ENCODE measurements at regions of chr10 and their contacts with region 1.

Region 1: DNA sequence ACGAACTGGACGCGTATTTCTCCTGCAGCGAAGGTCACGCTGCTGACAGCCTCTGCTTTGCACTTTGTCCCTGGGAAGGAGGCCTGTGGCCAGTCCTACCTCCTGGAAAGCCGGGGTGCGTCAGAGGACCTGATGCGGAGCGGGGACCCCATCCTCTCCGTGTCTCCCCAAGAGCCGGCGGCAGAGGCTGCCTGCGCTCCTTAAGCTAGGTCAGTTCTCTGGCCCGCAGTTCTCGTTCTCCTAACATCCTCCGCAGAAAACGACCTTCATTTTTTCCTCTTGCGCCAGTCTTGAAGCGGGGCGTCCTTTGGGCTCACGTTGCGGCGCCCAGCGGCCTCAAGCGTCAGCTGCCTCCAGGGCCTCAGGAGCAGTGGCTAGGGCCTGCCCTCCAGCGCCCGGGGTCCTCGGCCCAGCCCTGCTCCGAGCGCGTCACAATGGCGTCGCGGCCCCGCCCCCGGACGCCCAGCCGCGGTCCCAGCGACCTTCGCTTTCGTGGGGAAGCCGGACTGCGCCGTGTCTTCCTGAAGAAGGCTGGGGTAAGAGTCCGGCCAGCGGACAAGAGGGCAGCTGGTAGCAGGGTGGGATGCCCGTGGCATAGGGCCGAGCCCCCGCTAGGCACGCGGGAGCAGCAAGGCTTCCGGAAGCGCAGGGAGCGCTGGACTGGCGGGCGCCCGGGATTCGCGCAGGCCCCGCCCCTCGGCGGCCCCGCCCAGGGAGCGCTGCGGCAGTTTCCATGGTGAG is at the start of gene ZNF487:
- DNase-seq: peak; percentile 81 to 85
- ATAC-seq: peak; percentile 95 to 96
- H3K4me3 ChIP-seq: peak within 1 kb of the TSS; percentile 70 to 87 (median 77)
- H3K27ac ChIP-seq: peak within 1 kb of the TSS; percentile 91 to 99 (median 96)
- H3K4me1 ChIP-seq: peaks cover 6 to 8% of the 10 kb centered on the region in 2 donors
- H3K27me3 ChIP-seq: no peaks in the 10 kb centered on the region
- CTCF ChIP-seq: peak in 3 of 5 experiments; percentile 10 to 39 (median 31)
- POLR2A ChIP-seq: peak; percentile 81 to 94
- total RNA-seq, gene ZNF487: 0.80 to 2.4 (median 1.7) TPM

Region 2: GRCh38 chr10:43420369-43421200 is 16.0 kb before region 1 on chr10:
- in situ Hi-C with region 1: no loop called
- intact Hi-C with region 1: loop called (anchors 1 kb)
- DNase-seq: peak; percentile 87 to 95
- ATAC-seq: peak; percentile 92 to 93
- H3K4me3 ChIP-seq: peak overlapping the region; percentile 60 to 87 (median 79)
- H3K27ac ChIP-seq: peak overlapping the region; percentile 92 to 100 (median 96)
- H3K4me1 ChIP-seq: peaks cover 0 to 11% of the 10 kb centered on the region in 2 donors
- H3K27me3 ChIP-seq: no peaks in the 10 kb centered on the region
- CTCF ChIP-seq: peak in 1 of 5 experiments; percentile 21
- POLR2A ChIP-seq: peak; percentile 68 to 88

Region 3: GRCh38 chr10:43491855-43492254 is 55.3 kb after region 1 on chr10:
- in situ Hi-C with region 1: no loop called
- intact Hi-C with region 1: no loop called
- DNase-seq: no peak
- ATAC-seq: no peak
- H3K4me3 ChIP-seq: no peak overlapping the region
- H3K27ac ChIP-seq: no peak overlapping the region
- H3K4me1 ChIP-seq: no peaks in the 10 kb centered on the region
- H3K27me3 ChIP-seq: no peaks in the 10 kb centered on the region
- CTCF ChIP-seq: no peak
- POLR2A ChIP-seq: no peak

Region 4: DNA sequence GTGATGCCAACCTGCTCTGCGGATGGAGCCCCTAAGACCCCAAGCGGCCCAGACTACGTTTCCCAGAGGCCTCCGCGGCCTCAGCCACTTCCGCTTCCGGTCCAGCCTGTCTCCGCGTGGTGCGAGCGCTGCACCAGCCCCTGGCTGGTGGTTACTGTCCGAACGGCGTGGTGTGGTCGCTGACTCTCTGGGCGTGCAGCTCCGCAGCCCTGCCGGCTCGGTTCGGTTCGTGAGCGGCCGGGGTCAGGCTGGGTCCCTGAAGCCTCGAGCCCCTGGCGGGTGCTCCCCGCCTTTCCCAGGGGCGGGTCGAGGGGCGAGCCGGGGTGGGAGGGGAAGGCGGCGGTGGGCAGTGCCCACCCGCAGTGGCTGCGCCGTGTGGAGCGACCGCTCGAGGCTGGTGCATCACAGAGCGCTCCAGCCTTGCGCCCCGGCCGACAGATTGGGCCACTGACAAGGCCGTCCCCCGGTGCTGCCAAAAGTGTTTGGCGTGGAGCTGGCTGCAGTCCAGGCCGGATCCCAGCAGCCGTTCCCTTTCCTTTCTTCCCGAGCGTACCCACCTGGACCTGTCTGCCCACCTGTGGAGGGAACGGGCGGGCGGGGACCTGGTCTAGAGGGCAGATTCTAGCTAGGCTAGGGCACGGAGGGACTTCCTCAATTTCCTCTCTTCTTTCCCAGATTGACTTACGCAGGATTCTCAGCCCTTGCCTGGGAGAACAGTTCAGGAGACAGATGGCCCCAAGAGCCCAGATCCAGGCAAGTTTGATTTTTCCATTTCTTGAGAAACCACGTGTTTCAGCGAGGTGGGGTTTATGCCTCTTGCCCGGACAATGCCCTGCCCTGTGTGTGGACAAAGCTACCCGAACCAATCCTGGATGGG is 170.0 kb after region 1 on chr10 and contains the start of gene ZNF485:
- in situ Hi-C with region 1: no loop called
- intact Hi-C with region 1: no loop called
- DNase-seq: peak; percentile 35 to 54
- ATAC-seq: peak; percentile 88 to 90
- H3K4me3 ChIP-seq: peak within 1 kb of the TSS; percentile 80 to 100 (median 83)
- H3K27ac ChIP-seq: peak within 1 kb of the TSS; percentile 75 to 92 (median 82)
- H3K4me1 ChIP-seq: peaks cover 9 to 10% of the 10 kb centered on the region in 2 donors
- H3K27me3 ChIP-seq: no peaks in the 10 kb centered on the region
- CTCF ChIP-seq: no peak
- POLR2A ChIP-seq: peak in 1 of 2 donors; percentile 28
- total RNA-seq, gene ZNF485: 2.6 to 3.7 (median 2.9) TPM

Region 5: GRCh38 chr10:43683451-43684291 is 247.1 kb after region 1 on chr10:
- in situ Hi-C with region 1: no loop called
- intact Hi-C with region 1: no loop called
- DNase-seq: no peak
- ATAC-seq: peak in 1 of 2 donors; percentile 13
- H3K4me3 ChIP-seq: no peak overlapping the region
- H3K27ac ChIP-seq: no peak overlapping the region
- H3K4me1 ChIP-seq: peaks cover 4 to 20% of the 10 kb centered on the region in 2 donors
- H3K27me3 ChIP-seq: no peaks in the 10 kb centered on the region
- CTCF ChIP-seq: peak in 2 of 5 experiments; percentile 18 to 40
- POLR2A ChIP-seq: no peak